ENCODE measurements at regions of chr16 and their contacts with region 1.

Region 1: GRCh38 chr16:25257504-25257955 is at the start of gene ZKSCAN2:
- DNase-seq: peak; percentile 96
- H3K4me3 Mint-ChIP-seq: peak within 1 kb of the TSS; percentile 91
- H3K27ac Mint-ChIP-seq: peak within 1 kb of the TSS; percentile 97
- H3K4me1 Mint-ChIP-seq: peaks cover 45% of the 10 kb centered on the region
- H3K27me3 Mint-ChIP-seq: no peaks in the 10 kb centered on the region
- total RNA-seq, gene ZKSCAN2: 6.3 and 6.8 TPM in 2 replicates

Region 2: DNA sequence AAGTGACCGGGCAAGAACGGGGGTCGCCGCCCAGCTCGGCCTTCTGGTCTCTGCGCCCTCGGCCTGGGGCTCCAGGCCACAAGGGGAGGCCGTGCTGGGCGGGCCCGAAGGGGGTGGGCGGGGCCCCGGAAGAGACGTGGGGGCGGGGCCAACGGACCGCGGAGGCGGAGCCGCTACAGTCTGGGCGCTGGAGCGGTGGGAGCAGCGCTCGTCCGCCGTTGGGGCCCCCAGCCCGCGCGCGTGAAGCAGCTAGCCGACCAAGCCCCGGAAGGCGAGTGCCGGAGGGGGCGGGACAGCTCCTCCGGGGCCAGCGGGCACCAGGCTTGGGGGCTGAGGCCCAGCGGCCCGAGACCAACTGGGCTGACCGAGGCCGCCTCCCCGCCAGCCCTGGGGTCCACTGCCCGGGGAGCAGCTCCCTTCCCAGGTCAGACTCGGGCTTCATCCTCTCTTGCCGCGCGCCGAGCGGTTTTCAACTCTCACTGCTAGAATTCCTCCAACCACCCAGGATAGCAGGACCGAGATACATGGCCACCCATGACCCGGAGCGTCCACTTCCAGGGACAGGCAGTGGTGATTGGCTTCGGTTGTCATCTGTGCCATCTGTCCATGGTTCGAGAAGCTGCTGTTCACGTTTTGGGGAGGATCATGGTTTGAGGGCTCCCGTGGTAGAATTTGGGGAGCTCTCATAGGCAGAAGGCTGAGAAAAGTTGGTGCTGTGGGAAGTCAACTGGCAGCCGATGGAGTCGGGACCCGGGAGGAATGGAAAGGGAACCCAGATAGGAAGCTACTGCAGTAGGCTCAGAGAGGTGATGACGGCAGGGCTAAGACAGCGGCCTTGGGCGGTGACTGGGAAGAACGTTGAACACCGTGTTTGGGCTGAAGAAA is 190.5 kb before region 1 on chr16:
- intact Hi-C with region 1: loop called (anchors 10 kb)
- DNase-seq: peak; percentile 95
- H3K4me3 Mint-ChIP-seq: peak overlapping the region; percentile 92
- H3K27ac Mint-ChIP-seq: peak overlapping the region; percentile 87
- H3K4me1 Mint-ChIP-seq: peaks cover 35% of the 10 kb centered on the region
- H3K27me3 Mint-ChIP-seq: no peaks in the 10 kb centered on the region

Region 3: GRCh38 chr16:25235991-25236390 is 21.5 kb before region 1 on chr16:
- intact Hi-C with region 1: loop called (anchors 2 kb)
- DNase-seq: no peak
- H3K4me3 Mint-ChIP-seq: no peak overlapping the region
- H3K27ac Mint-ChIP-seq: no peak overlapping the region
- H3K4me1 Mint-ChIP-seq: peaks cover 2% of the 10 kb centered on the region
- H3K27me3 Mint-ChIP-seq: peaks cover 1% of the 10 kb centered on the region